Activated CD4-positive, alpha-beta T cell treated with anti-CD3 and anti-CD28 coated beads for 36 hours (primary cell): ENCODE measurements at regions of chr5 and their contacts with region 1.

Region 1: GRCh38 chr5:151223469-151224264 is at the start of gene CCDC69:
- DNase-seq: peak; percentile 75
- ATAC-seq: peak; percentile 50
- H3K4me3 Mint-ChIP-seq: peak within 1 kb of the TSS; percentile 87
- H3K27ac Mint-ChIP-seq: peak within 1 kb of the TSS; percentile 94
- H3K4me1 Mint-ChIP-seq: peaks cover 57% of the 10 kb centered on the region
- H3K27me3 Mint-ChIP-seq: no peaks in the 10 kb centered on the region
- total RNA-seq, gene CCDC69: 24.8 to 26.9 TPM

Region 2: GRCh38 chr5:151202381-151203139 is 21.1 kb before region 1 on chr5:
- CTCF ChIA-PET with region 1: interaction called, 5 read pairs
- POLR2A ChIA-PET with region 1: no interaction called
- intact Hi-C with region 1: loop called in 1 of 2 experiments (anchors 2 kb)
- DNase-seq: peak; percentile 70
- ATAC-seq: peak; percentile 100
- H3K4me3 Mint-ChIP-seq: no peak overlapping the region
- H3K27ac Mint-ChIP-seq: peak overlapping the region; percentile 75
- H3K4me1 Mint-ChIP-seq: peaks cover 36% of the 10 kb centered on the region
- H3K27me3 Mint-ChIP-seq: no peaks in the 10 kb centered on the region

Region 3: GRCh38 chr5:151239237-151239861 is 15.7 kb after region 1 on chr5:
- CTCF ChIA-PET with region 1: interaction called, 50 read pairs
- POLR2A ChIA-PET with region 1: no interaction called
- intact Hi-C with region 1: loop called in 1 of 2 experiments (anchors 2 kb)
- DNase-seq: peak; percentile 82
- ATAC-seq: peak; percentile 71
- H3K4me3 Mint-ChIP-seq: no peak overlapping the region
- H3K27ac Mint-ChIP-seq: no peak overlapping the region
- H3K4me1 Mint-ChIP-seq: peaks cover 29% of the 10 kb centered on the region
- H3K27me3 Mint-ChIP-seq: no peaks in the 10 kb centered on the region

Region 4: GRCh38 chr5:151733358-151734063 is 509.8 kb after region 1 on chr5:
- CTCF ChIA-PET with region 1: no interaction called
- POLR2A ChIA-PET with region 1: no interaction called
- intact Hi-C with region 1: no loop called
- DNase-seq: no peak
- ATAC-seq: no peak
- H3K4me3 Mint-ChIP-seq: no peak overlapping the region
- H3K27ac Mint-ChIP-seq: no peak overlapping the region
- H3K4me1 Mint-ChIP-seq: no peaks in the 10 kb centered on the region
- H3K27me3 Mint-ChIP-seq: no peaks in the 10 kb centered on the region